ENCODE measurements at regions of chr4 and their contacts with region 1.

Region 1: GRCh38 chr4:24321151-24321550 is 263.2 kb downstream of the DHX15 start:
- DNase-seq: no peak
- H3K4me3 ChIP-seq: no peak overlapping the region
- H3K27ac ChIP-seq: no peak overlapping the region
- H3K4me1 ChIP-seq: no peaks in the 10 kb centered on the region
- H3K27me3 ChIP-seq: no peaks in the 10 kb centered on the region
- CTCF ChIP-seq: no peak
- POLR2A ChIP-seq: no peak

Region 2: GRCh38 chr4:24363751-24364150 is 42.6 kb after region 1 on chr4:
- intact Hi-C with region 1: loop called (anchors 1 kb)
- DNase-seq: no peak
- H3K4me3 ChIP-seq: no peak overlapping the region
- H3K27ac ChIP-seq: no peak overlapping the region
- H3K4me1 ChIP-seq: no peaks in the 10 kb centered on the region
- H3K27me3 ChIP-seq: no peaks in the 10 kb centered on the region
- CTCF ChIP-seq: no peak
- POLR2A ChIP-seq: no peak

Region 3: DNA sequence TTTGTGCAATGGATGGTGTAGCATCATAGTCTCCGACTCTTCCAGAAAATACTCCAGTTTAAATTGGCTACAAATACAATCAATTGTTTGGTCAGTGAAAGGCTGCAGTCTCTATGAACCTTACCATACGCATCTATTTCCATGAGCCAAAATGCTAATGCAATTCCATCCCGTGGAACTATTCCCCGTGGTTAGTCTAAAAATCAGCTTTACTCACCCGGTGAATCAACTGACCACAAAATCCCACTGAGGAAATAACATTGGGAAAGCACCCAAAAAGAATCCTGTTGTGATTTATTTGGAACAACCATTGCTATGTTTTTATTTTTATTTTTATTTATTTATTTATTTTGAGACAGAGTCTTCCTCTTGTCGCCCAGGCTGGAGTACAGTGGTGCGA is 176.1 kb after region 1 on chr4:
- intact Hi-C with region 1: no loop called
- DNase-seq: no peak
- H3K4me3 ChIP-seq: no peak overlapping the region
- H3K27ac ChIP-seq: no peak overlapping the region
- H3K4me1 ChIP-seq: no peaks in the 10 kb centered on the region
- H3K27me3 ChIP-seq: no peaks in the 10 kb centered on the region
- CTCF ChIP-seq: no peak
- POLR2A ChIP-seq: no peak

Measured in vagina (tissue), 2 donors.